ENCODE measurements at regions of chr10 and their contacts with region 1.

Region 1: DNA sequence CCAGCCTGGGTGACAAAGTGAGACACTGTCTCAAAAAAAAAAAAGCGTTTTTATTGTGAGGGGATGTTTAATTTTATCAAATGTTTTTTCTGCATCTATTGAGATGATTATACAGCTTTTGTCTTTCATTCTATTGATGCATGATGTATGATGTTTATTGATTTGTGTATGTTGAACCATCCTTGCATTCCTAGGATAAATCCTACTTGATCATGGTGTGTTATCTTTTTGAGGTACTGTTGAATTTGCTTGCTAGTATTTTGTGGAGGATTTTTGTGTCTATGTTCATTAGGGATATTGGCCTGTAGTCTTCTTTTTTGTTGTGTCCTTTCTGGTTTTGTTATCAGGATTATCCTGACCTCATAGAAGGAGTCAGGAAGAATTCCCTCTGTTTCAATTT is 22.3 kb upstream of the PLA2G12B start:
- DNase-seq: no peak
- ATAC-seq: no peak
- H3K4me3 ChIP-seq: no peak overlapping the region
- H3K27ac ChIP-seq: no peak overlapping the region
- H3K4me1 ChIP-seq: no peaks in the 10 kb centered on the region
- H3K27me3 ChIP-seq: no peaks in the 10 kb centered on the region
- CTCF ChIP-seq: no peak

Region 2: DNA sequence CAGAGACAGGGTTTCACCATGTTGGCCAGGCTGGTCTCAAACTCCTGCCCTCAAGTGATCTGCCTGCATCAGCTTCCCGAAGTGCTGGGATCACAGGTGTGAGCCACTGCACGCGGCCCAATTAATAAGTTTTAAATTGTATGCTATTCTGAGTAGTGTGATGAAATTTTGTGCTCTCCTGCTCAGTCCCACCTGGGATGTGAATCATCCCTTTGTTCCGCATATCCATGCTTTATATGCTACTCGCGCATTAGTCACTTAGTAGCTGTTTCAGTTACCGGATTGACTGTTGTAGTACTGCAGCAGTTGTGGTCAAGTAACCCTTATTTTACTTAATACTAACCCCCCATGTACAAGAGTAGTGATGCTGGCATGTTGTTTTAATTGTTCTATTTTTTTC is 130.7 kb before region 1 on chr10:
- CTCF ChIA-PET with region 1: interaction called, 12 read pairs
- POLR2A ChIA-PET with region 1: no interaction called
- intact Hi-C with region 1: no loop called
- DNase-seq: peak; percentile 100
- ATAC-seq: peak; percentile 99
- H3K4me3 ChIP-seq: no peak overlapping the region
- H3K27ac ChIP-seq: peak overlapping the region; percentile 8; the same call in 1 of the 2 replicates
- H3K4me1 ChIP-seq: peaks cover 25% of the 10 kb centered on the region
- H3K27me3 ChIP-seq: no peaks in the 10 kb centered on the region
- CTCF ChIP-seq: no peak

Region 3: GRCh38 chr10:73965890-73966768 is 989.2 kb after region 1 on chr10:
- CTCF ChIA-PET with region 1: no interaction called
- POLR2A ChIA-PET with region 1: no interaction called
- intact Hi-C with region 1: no loop called
- DNase-seq: peak; percentile 100
- ATAC-seq: peak; percentile 98
- H3K4me3 ChIP-seq: peak overlapping the region; percentile 6
- H3K27ac ChIP-seq: peak overlapping the region; percentile 73
- H3K4me1 ChIP-seq: peaks cover 27% of the 10 kb centered on the region
- H3K27me3 ChIP-seq: no peaks in the 10 kb centered on the region
- CTCF ChIP-seq: no peak

Measured in PC-3 (cell line).